Activated naive CD4-positive, alpha-beta T cell treated with anti-CD3 and anti-CD28 coated beads, Interleukin-2, amount 10 ng/mL, durations not matched to agents 7 days and 5 days (primary cell): ENCODE measurements at regions of chr9 and their contacts with region 1.

Region 1: GRCh38 chr9:96856363-96857286 is 2.3 kb upstream of the ZNF782 start:
- DNase-seq: peak; percentile 81
- H3K4me3 Mint-ChIP-seq: no peak overlapping the region
- H3K27ac Mint-ChIP-seq: no peak overlapping the region
- H3K4me1 Mint-ChIP-seq: peaks cover 28% of the 10 kb centered on the region
- H3K27me3 Mint-ChIP-seq: peaks cover 19% of the 10 kb centered on the region

Region 2: DNA sequence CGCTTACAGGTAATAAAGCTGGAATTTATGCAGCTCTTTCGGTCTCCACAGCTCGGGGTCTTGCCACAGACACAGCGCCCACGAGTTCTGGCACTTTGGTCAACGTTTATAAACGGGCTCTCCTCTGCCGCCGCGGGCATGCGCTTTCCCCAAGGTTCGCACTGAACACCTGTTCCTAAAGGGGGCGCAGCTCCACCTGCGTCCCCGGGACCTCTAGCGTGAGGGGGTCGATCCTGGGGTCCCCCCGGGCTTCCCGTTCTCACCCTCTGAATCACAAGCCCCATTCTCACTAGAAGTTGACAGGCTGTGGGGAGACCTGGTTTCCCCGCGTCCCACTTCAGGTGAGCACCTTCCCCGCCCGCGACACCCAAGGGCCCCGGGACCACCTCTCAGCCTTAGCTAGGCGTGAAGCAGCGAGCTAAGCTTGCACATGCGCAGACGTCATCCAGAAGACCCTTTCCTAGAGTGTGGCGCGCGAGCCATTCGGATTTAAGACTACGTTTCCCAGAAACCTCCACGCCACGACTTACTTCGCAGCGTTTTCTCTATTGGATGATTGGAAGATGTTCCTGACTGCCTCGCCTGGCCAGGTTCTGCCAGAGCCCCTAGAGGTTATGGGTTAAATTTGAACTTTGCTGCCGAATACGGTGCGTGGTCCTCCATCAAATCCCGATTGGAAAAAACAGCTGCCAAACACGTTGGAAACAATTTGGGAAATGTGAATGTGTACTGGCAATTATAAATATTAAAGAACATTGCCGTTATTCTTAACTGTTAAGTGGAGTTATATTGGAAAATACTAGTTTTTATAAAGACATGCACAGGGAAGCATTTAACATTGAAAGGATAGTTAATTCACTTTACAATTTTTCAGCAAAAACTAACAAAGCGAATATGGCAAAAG is 19.1 kb after region 1 on chr9:
- CTCF ChIA-PET with region 1: interaction called, 23 read pairs
- DNase-seq: peak; percentile 72
- H3K4me3 Mint-ChIP-seq: peak overlapping the region; percentile 84
- H3K27ac Mint-ChIP-seq: peak overlapping the region; percentile 77
- H3K4me1 Mint-ChIP-seq: peaks cover 35% of the 10 kb centered on the region
- H3K27me3 Mint-ChIP-seq: peaks cover 52% of the 10 kb centered on the region

Region 3: DNA sequence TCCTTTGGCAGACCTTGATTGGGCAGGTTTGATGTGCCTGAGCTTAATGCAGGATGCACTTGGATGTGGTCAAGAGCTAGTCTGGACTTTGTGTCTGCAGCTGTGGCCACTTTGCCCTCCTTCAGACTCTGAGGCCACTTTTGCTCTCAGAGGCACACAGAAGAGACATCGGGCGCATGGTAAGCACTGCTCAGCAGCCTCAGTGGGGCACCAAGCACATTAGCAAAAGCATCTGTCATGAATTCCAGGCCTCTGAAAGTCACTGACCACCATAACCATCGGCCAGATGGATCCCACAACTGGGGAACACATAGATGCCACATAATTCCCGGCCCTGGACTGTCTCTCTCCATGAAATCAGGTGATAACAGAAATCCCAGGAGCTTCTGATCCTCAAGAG is 32.0 kb after region 1 on chr9:
- CTCF ChIA-PET with region 1: no interaction called
- DNase-seq: no peak
- H3K4me3 Mint-ChIP-seq: no peak overlapping the region
- H3K27ac Mint-ChIP-seq: no peak overlapping the region
- H3K4me1 Mint-ChIP-seq: no peaks in the 10 kb centered on the region
- H3K27me3 Mint-ChIP-seq: no peaks in the 10 kb centered on the region

Region 4: GRCh38 chr9:97096793-97097192 is 240.2 kb after region 1 on chr9:
- CTCF ChIA-PET with region 1: no interaction called
- DNase-seq: no peak
- H3K4me3 Mint-ChIP-seq: no peak overlapping the region
- H3K27ac Mint-ChIP-seq: no peak overlapping the region
- H3K4me1 Mint-ChIP-seq: no peaks in the 10 kb centered on the region
- H3K27me3 Mint-ChIP-seq: peaks cover 7% of the 10 kb centered on the region

Region 5: GRCh38 chr9:97386733-97387503 is 530.3 kb after region 1 on chr9:
- CTCF ChIA-PET with region 1: interaction called, 18 read pairs
- DNase-seq: peak; percentile 79
- H3K4me3 Mint-ChIP-seq: no peak overlapping the region
- H3K27ac Mint-ChIP-seq: no peak overlapping the region
- H3K4me1 Mint-ChIP-seq: peaks cover 16% of the 10 kb centered on the region
- H3K27me3 Mint-ChIP-seq: peaks cover 44% of the 10 kb centered on the region

Region 6: GRCh38 chr9:97398999-97399758 is 542.6 kb after region 1 on chr9:
- CTCF ChIA-PET with region 1: interaction called, 17 read pairs
- DNase-seq: peak; percentile 72
- H3K4me3 Mint-ChIP-seq: no peak overlapping the region
- H3K27ac Mint-ChIP-seq: no peak overlapping the region
- H3K4me1 Mint-ChIP-seq: peaks cover 17% of the 10 kb centered on the region
- H3K27me3 Mint-ChIP-seq: peaks cover 51% of the 10 kb centered on the region

Region 7: DNA sequence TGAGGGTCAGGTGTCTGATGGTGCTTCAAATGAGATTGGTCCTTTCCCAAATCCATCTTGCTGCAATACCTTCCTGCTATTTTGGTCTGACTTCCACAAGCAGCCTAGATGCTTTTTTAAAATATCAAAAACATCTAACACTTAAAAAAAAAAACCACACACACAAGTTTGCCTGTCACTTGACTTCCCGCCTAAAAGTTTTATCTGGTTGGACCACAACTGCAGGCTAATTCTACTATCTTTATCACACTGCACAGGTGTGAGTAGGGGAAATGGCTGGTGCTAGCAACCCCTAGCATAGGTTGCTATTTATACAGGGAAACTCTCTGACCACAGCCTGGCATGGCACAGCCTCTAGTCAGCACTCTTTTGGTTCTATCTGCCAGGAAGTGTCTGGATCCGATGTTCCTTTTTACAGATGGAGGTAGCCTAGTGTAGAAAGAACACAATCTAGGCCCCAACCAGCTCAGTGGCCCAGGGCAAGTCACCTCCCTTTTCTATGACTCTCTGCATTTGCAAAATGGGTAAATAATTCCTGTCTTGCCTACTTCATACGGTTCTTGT is 1081.5 kb after region 1 on chr9 and contains the start of gene HEMGN:
- CTCF ChIA-PET with region 1: no interaction called
- DNase-seq: peak; percentile 57
- H3K4me3 Mint-ChIP-seq: peak within 1 kb of the TSS; percentile 8
- H3K27ac Mint-ChIP-seq: peak within 1 kb of the TSS; percentile 87
- H3K4me1 Mint-ChIP-seq: peaks cover 39% of the 10 kb centered on the region
- H3K27me3 Mint-ChIP-seq: peaks cover 5% of the 10 kb centered on the region